ENCODE measurements at regions of chr17 and their contacts with region 1.

Region 1: GRCh38 chr17:9228408-9229151 is 207.3 kb downstream of the NTN1 start:
- DNase-seq: no peak
- ATAC-seq: peak in 1 of 2 donors; percentile 69

Region 2: GRCh38 chr17:9150446-9151090 is 78.0 kb before region 1 on chr17:
- intact Hi-C with region 1: no loop called
- DNase-seq: no peak
- ATAC-seq: peak; percentile 11 to 27

Region 3: GRCh38 chr17:9273428-9274391 is 45.1 kb after region 1 on chr17:
- intact Hi-C with region 1: loop called in 1 of 2 experiments (anchors 10 kb)
- DNase-seq: peak; percentile 40
- ATAC-seq: peak; percentile 68 to 77

Region 4: GRCh38 chr17:9544221-9544620 is 315.6 kb after region 1 on chr17:
- intact Hi-C with region 1: no loop called
- DNase-seq: no peak
- ATAC-seq: no peak